Activated naive CD8-positive, alpha-beta T cell treated with anti-CD3 and anti-CD28 coated beads, Interleukin-2, amount 10 ng/mL, durations not matched to agents 7 days and 5 days (primary cell): ENCODE measurements at regions of chr1 and their contacts with region 1.

Region 1: GRCh38 chr1:23098463-23099170 is 70.0 kb downstream of the LUZP1 start:
- DNase-seq: no peak
- ATAC-seq: peak; percentile 18
- H3K4me3 Mint-ChIP-seq: peak overlapping the region; percentile 11
- H3K27ac Mint-ChIP-seq: no peak overlapping the region
- H3K4me1 Mint-ChIP-seq: peaks cover 34% of the 10 kb centered on the region
- H3K27me3 Mint-ChIP-seq: no peaks in the 10 kb centered on the region

Region 2: GRCh38 chr1:23111600-23112535 is 13.3 kb after region 1 on chr1:
- POLR2A ChIA-PET with region 1: interaction called, 10 read pairs
- DNase-seq: no peak
- ATAC-seq: no peak
- H3K4me3 Mint-ChIP-seq: no peak overlapping the region
- H3K27ac Mint-ChIP-seq: peak overlapping the region; percentile 11
- H3K4me1 Mint-ChIP-seq: peaks cover 41% of the 10 kb centered on the region
- H3K27me3 Mint-ChIP-seq: peaks cover 2% of the 10 kb centered on the region

Region 3: GRCh38 chr1:23184212-23184934 is 85.8 kb after region 1 on chr1:
- POLR2A ChIA-PET with region 1: interaction called, 13 read pairs
- DNase-seq: peak; percentile 52
- ATAC-seq: peak; percentile 33
- H3K4me3 Mint-ChIP-seq: peak overlapping the region; percentile 67
- H3K27ac Mint-ChIP-seq: no peak overlapping the region
- H3K4me1 Mint-ChIP-seq: peaks cover 7% of the 10 kb centered on the region
- H3K27me3 Mint-ChIP-seq: peaks cover 16% of the 10 kb centered on the region

Region 4: DNA sequence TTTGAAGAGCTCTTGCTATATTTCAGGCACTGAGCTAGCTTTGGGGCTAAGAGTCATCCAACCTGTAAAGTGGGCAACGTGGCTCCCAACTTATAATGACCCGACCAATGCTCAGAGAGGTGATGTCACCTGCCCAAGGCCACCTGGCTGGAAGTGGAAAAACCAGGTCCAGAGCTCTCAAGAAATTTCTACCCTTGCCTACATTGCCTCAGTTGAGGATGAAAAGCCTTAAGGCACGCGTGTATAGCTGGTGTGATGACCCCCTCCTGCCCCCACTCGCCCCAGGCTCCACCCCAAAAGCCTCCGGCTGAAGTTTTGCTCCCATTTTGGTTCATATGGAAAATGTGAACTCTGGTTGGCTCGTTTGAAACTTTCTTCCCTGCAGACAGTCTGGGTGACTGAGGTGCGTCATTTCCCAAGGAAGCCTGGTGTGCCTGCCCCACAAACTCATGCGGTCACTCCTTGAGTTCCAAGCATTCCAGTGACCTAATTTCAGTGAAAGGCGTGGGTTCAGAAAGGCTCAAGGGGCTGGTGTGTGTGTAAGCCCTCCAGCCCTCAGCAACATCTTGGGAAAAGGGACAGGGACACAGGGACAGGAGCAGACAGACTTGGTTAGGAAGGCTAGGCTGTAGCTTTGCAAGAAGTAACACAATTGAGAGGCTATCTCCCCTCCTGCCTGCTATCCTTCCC is 98.2 kb after region 1 on chr1:
- POLR2A ChIA-PET with region 1: no interaction called
- DNase-seq: no peak
- ATAC-seq: no peak
- H3K4me3 Mint-ChIP-seq: no peak overlapping the region
- H3K27ac Mint-ChIP-seq: no peak overlapping the region
- H3K4me1 Mint-ChIP-seq: no peaks in the 10 kb centered on the region
- H3K27me3 Mint-ChIP-seq: peaks cover 19% of the 10 kb centered on the region

Region 5: GRCh38 chr1:23216771-23217420 is 118.3 kb after region 1 on chr1:
- POLR2A ChIA-PET with region 1: no interaction called
- DNase-seq: peak; percentile 71
- ATAC-seq: peak; percentile 61
- H3K4me3 Mint-ChIP-seq: peak overlapping the region; percentile 56
- H3K27ac Mint-ChIP-seq: no peak overlapping the region
- H3K4me1 Mint-ChIP-seq: peaks cover 4% of the 10 kb centered on the region
- H3K27me3 Mint-ChIP-seq: peaks cover 72% of the 10 kb centered on the region